ENCODE measurements at regions of chr13 and their contacts with region 1.

Region 1: GRCh38 chr13:73138643-73139491 is 80.1 kb downstream of the KLF5 start:
- DNase-seq: peak; percentile 76
- ATAC-seq: peak; percentile 91
- H3K4me3 ChIP-seq: no peak overlapping the region
- H3K27ac ChIP-seq: peak overlapping the region; percentile 70; the same call in 1 of the 2 replicates
- H3K4me1 ChIP-seq: peaks cover 14% of the 10 kb centered on the region
- H3K27me3 ChIP-seq: no peaks in the 10 kb centered on the region
- CTCF ChIP-seq: no peak
- POLR2A ChIP-seq: no peak
- RAD21 ChIP-seq: no peak

Region 2: DNA sequence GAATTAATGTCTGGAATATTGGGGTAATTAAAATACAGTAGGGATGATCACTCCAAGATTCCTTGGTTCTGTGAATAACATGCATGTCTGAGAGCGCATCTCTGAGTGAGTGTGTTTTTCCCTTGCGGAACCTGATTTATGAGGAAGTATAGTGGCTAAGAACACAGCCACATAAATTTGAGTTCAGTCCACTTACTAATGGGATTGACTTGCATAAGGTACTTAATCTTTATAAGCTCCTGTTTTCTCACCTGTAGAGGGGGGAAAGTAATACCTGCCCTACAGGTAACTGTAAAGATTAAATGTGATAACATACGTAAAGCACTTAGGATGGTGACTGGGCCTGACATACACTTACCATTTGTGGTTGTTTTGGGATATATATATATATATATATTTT is 19.3 kb before region 1 on chr13:
- CTCF ChIA-PET with region 1: no interaction called
- POLR2A ChIA-PET with region 1: no interaction called
- dilution Hi-C with region 1: no loop called
- in situ Hi-C with region 1: no loop called
- intact Hi-C with region 1: no loop called
- DNase-seq: no peak
- ATAC-seq: no peak
- H3K4me3 ChIP-seq: no peak overlapping the region
- H3K27ac ChIP-seq: no peak overlapping the region
- H3K4me1 ChIP-seq: no peaks in the 10 kb centered on the region
- H3K27me3 ChIP-seq: no peaks in the 10 kb centered on the region
- CTCF ChIP-seq: no peak
- POLR2A ChIP-seq: no peak
- RAD21 ChIP-seq: no peak

Region 3: GRCh38 chr13:73189370-73190165 is 50.7 kb after region 1 on chr13:
- CTCF ChIA-PET with region 1: no interaction called
- POLR2A ChIA-PET with region 1: no interaction called
- dilution Hi-C with region 1: no loop called
- in situ Hi-C with region 1: no loop called
- intact Hi-C with region 1: no loop called
- DNase-seq: no peak
- ATAC-seq: no peak
- H3K4me3 ChIP-seq: no peak overlapping the region
- H3K27ac ChIP-seq: no peak overlapping the region
- H3K4me1 ChIP-seq: peaks cover 2% of the 10 kb centered on the region; the same call in 1 of the 2 replicates
- H3K27me3 ChIP-seq: no peaks in the 10 kb centered on the region
- CTCF ChIP-seq: no peak
- POLR2A ChIP-seq: no peak
- RAD21 ChIP-seq: no peak

Region 4: DNA sequence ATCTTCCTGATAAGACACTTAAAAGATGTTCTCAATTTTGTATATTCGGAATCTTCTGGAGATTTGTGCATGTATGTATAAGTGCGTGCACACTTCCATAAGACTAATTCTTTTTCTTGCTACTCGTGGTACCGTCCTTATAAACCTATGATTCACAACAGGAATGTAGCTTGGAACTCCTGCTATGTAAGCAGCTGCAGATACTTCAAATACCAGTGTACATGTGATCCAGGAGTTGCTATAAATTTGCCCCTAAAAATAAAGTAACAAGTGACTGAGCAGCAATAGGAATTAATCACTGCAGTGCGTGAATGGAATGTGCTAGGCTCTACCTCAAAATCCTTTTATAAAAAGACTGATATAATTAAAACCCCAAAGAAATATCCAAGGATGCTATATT is 134.9 kb after region 1 on chr13:
- CTCF ChIA-PET with region 1: no interaction called
- POLR2A ChIA-PET with region 1: no interaction called
- dilution Hi-C with region 1: no loop called
- in situ Hi-C with region 1: no loop called
- intact Hi-C with region 1: loop called (anchors 10 kb)
- DNase-seq: peak; percentile 89
- ATAC-seq: peak; percentile 94
- H3K4me3 ChIP-seq: no peak overlapping the region
- H3K27ac ChIP-seq: no peak overlapping the region
- H3K4me1 ChIP-seq: peaks cover 13% of the 10 kb centered on the region; the same call in 1 of the 2 replicates
- H3K27me3 ChIP-seq: no peaks in the 10 kb centered on the region
- CTCF ChIP-seq: no peak
- POLR2A ChIP-seq: no peak
- RAD21 ChIP-seq: no peak

Measured in IMR-90 (cell line).